H1 (cell line): ENCODE measurements at regions of chr12 and their contacts with region 1.

Region 1: GRCh38 chr12:46124848-46125619 is 134.7 kb upstream of the SCAF11 start:
- DNase-seq: no peak
- H3K4me3 ChIP-seq: no peak overlapping the region; a peak in 1 of 8 replicates
- H3K27ac ChIP-seq: no peak overlapping the region
- H3K4me1 ChIP-seq: no peaks in the 10 kb centered on the region
- H3K27me3 ChIP-seq: no peaks in the 10 kb centered on the region
- CTCF ChIP-seq: peak in 2 of 3 experiments; percentile 51; a peak in 3 of 4 replicates
- EP300 ChIP-seq: no peak
- POLR2A ChIP-seq: no peak
- RAD21 ChIP-seq: peak; percentile 73 to 76

Region 2: GRCh38 chr12:45816652-45817051 is 308.4 kb before region 1 on chr12:
- CTCF ChIA-PET with region 1: no interaction called
- POLR2A ChIA-PET with region 1: no interaction called
- DNase-seq: no peak
- H3K4me3 ChIP-seq: no peak overlapping the region
- H3K27ac ChIP-seq: no peak overlapping the region
- H3K4me1 ChIP-seq: peaks cover 0 to 2% (median 0%) of the 10 kb centered on the region in 4 experiments; a peak in 1 of 7 replicates
- H3K27me3 ChIP-seq: no peaks in the 10 kb centered on the region
- CTCF ChIP-seq: peak in 1 of 3 experiments; percentile 14; a peak in 1 of 4 replicates
- EP300 ChIP-seq: no peak
- POLR2A ChIP-seq: no peak
- RAD21 ChIP-seq: no peak

Region 3: GRCh38 chr12:46071769-46072624 is 53.0 kb before region 1 on chr12:
- CTCF ChIA-PET with region 1: interaction called, 22 read pairs
- POLR2A ChIA-PET with region 1: interaction called, 3 read pairs
- DNase-seq: peak; percentile 46 to 80
- H3K4me3 ChIP-seq: no peak overlapping the region
- H3K27ac ChIP-seq: no peak overlapping the region
- H3K4me1 ChIP-seq: no peaks in the 10 kb centered on the region
- H3K27me3 ChIP-seq: no peaks in the 10 kb centered on the region
- CTCF ChIP-seq: peak; percentile 88 to 96 (median 91)
- EP300 ChIP-seq: no peak
- POLR2A ChIP-seq: no peak
- RAD21 ChIP-seq: peak; percentile 92 to 93

Region 4: GRCh38 chr12:46108721-46109120 is 16.3 kb before region 1 on chr12:
- CTCF ChIA-PET with region 1: interaction called, 14 read pairs
- POLR2A ChIA-PET with region 1: no interaction called
- DNase-seq: no peak
- H3K4me3 ChIP-seq: no peak overlapping the region
- H3K27ac ChIP-seq: no peak overlapping the region
- H3K4me1 ChIP-seq: no peaks in the 10 kb centered on the region
- H3K27me3 ChIP-seq: no peaks in the 10 kb centered on the region
- CTCF ChIP-seq: no peak
- EP300 ChIP-seq: no peak
- POLR2A ChIP-seq: no peak
- RAD21 ChIP-seq: no peak

Region 5: DNA sequence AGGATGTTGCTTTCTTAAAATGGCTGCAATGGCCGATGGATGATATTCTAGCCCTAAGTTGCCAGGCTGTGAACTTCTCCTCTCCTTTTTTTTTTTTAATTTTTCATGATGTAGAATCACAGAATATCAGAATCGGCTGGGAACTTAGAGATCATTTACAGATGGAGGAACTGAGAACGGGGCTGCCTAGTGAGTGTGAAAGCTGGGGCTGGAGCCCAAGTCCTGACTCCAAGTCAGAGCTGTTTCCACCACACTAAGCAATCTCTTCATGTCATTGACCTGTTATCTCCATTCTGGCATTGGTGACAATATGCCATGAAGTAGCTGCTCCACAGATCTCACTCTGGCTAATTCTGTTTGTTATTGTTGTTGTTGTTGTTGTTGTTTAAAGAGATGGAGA is 22.1 kb after region 1 on chr12:
- CTCF ChIA-PET with region 1: interaction called, 13 read pairs
- POLR2A ChIA-PET with region 1: no interaction called
- DNase-seq: no peak
- H3K4me3 ChIP-seq: no peak overlapping the region
- H3K27ac ChIP-seq: no peak overlapping the region
- H3K4me1 ChIP-seq: no peaks in the 10 kb centered on the region
- H3K27me3 ChIP-seq: 0 out of 7 replicates have a peak, but pooled peaks cover 0 to 2% (median 0%) of the 10 kb centered on the region in 4 experiments
- CTCF ChIP-seq: no peak
- EP300 ChIP-seq: no peak
- POLR2A ChIP-seq: no peak
- RAD21 ChIP-seq: no peak

Region 6: DNA sequence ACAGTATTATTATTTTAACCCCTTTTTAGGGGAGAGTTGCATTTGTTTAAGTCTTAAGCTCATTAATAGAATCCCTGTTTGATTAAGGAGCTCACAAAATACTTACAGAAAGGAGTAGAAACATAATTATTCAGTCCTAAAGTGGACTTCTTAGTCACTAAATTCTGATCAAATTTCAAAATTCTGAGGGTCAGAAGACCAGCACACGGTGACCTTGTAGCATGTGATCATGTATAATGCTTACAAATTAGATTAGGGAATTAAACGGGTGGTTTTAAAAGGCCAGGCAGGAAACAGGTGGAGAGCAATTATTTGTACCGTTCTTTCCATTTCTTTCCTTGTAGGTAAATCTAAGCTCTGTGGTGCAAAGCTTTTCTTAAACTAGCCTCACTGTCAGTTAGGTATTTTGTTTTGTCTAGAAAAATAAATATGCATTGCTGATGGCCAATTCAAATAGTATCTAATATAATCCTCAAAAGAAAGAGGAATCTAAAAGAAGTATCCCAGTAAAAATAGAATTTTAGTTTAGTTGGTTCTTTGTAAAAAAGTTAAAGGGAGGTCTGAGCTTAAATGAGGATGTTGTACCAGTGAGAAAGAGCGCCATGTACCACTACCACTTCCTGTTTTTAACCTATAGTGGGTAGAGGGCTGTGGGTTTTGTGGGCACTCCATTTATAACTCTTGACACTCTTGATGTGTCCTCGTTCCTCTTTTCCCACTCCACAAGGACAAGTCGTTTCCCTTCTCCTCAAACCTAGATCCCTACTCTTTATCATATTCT is 92.7 kb after region 1 on chr12:
- CTCF ChIA-PET with region 1: no interaction called
- POLR2A ChIA-PET with region 1: no interaction called
- DNase-seq: no peak
- H3K4me3 ChIP-seq: no peak overlapping the region
- H3K27ac ChIP-seq: no peak overlapping the region
- H3K4me1 ChIP-seq: peaks cover 0 to 22% (median 7%) of the 10 kb centered on the region in 4 experiments; a peak in 4 of 7 replicates
- H3K27me3 ChIP-seq: no peaks in the 10 kb centered on the region
- CTCF ChIP-seq: no peak
- EP300 ChIP-seq: no peak
- POLR2A ChIP-seq: no peak
- RAD21 ChIP-seq: no peak